A549 (cell line): ENCODE measurements at regions of chr13 and their contacts with region 1.

Region 1: DNA sequence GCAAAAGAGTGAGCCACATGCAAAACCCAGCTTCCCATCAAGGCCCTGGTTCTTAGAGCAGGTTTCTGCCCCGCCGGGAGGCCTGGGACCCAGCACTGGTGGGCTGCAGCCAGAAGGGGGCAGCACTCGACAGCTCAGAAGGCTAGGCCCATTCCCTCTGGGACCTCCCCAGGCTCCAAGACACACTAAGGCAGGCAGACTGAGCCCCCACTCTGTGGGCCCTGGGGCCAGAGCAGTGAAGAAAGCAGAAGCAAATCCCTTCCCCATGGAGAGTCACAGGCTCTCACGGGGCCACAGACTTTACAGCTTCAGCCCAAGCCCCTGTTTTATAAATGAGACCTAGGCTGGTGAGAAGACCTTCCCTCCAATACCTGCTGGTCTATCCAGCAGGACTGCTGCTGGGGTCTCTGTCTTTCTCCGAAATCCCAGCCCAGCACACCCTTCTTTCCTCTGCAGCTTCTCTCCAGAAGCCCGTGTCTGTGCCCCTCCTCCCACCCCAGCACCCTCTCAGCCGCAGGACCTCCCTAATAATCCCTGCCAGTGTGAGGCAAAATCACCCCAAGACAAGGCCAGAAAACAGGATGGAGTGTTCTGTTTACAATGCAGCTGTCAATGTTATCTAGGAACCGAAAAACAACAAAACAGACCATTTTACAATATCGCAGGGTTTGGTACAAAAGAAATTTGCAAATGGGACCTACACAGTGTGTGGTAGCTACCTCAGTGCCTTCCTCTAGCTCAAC is 109.3 kb downstream of the ABCC4 start:
- DNase-seq: peak; percentile 31 to 77
- ATAC-seq: peak; percentile 97 to 98
- H3K4me3 ChIP-seq: no peak overlapping the region
- H3K27ac ChIP-seq: peak overlapping the region; percentile 78 to 86
- H3K4me1 ChIP-seq: peaks cover 41% of the 10 kb centered on the region
- CTCF ChIP-seq: peak; percentile 83
- EP300 ChIP-seq: no peak
- POLR2A ChIP-seq: no peak
- RAD21 ChIP-seq: peak; percentile 90 to 93

Region 2: DNA sequence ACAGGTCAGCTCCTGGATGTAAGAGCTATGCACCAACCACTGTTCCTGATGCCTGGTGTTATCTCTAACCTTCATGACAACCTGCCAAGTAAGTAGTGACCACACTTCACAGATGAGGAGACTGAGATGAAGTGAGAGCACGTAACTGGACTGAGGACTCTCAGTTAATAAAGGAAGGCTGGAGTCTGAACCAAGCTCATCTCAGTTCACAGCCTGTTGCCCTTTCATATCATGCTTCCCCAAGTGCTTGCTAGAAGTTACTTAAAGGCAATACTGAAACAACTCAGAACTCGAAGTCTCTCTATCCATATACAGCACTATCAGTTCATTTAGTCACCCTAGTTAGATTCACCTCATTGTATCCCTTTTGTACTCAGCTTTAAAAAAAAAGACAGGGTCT is 10.4 kb before region 1 on chr13:
- CTCF ChIA-PET with region 1: interaction called, 12 read pairs
- POLR2A ChIA-PET with region 1: no interaction called
- DNase-seq: no peak
- ATAC-seq: no peak
- H3K4me3 ChIP-seq: no peak overlapping the region
- H3K27ac ChIP-seq: no peak overlapping the region; a peak in 1 of 6 replicates
- H3K4me1 ChIP-seq: peaks cover 20% of the 10 kb centered on the region
- CTCF ChIP-seq: no peak
- EP300 ChIP-seq: no peak
- POLR2A ChIP-seq: no peak
- RAD21 ChIP-seq: no peak

Region 3: GRCh38 chr13:95247852-95248251 is 55.9 kb after region 1 on chr13:
- CTCF ChIA-PET with region 1: interaction called, 10 read pairs
- POLR2A ChIA-PET with region 1: no interaction called
- DNase-seq: no peak
- ATAC-seq: no peak
- H3K4me3 ChIP-seq: no peak overlapping the region
- H3K27ac ChIP-seq: 0 out of 6 replicates have a peak overlapping the region, but pooled peaks of 1 of the 2 experiments have one; percentile 24
- H3K4me1 ChIP-seq: peaks cover 25% of the 10 kb centered on the region; the same call in 2 of the 3 replicates
- CTCF ChIP-seq: no peak
- EP300 ChIP-seq: no peak
- POLR2A ChIP-seq: no peak
- RAD21 ChIP-seq: no peak

Region 4: DNA sequence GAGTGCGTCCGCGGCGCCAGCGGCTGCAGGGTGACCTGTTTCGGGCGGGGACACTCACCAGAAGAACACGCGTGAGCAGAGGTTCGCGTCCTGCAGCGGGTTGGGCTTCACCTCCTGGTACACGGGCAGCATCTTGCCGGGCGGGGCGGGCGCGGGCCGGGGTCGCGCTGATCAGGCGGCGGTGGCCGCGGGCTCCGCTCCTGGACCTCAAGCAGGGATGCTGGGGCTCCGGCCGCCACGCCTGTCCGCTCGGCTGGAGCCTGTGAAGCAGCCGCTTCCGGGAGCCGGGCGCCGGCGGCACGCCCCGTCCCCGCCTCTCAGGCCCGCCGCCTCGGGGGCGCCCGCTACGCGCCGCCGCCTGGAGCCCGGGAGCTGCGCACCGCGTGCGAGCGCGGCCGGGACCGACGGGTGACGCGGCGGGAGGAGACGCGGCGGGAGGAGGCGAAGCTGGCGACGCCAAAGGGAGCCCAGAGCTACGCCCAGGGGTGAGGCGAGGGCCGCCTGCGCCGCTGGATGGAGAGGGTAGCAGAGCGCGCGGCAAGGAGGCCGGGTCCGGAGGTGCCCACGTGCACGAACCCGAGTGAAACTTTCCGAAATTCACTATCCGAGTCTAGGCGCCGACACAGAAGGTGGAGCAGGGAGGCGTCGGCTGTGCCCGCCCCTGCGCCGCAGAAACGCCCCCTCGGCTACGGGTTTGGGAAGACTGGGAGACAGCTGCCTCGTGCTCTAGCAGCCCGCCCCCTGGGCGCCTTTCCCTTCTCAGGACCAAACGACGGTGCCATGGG is 109.4 kb after region 1 on chr13 and contains the start of gene ABCC4:
- CTCF ChIA-PET with region 1: interaction called, 52 read pairs
- POLR2A ChIA-PET with region 1: no interaction called
- DNase-seq: peak; percentile 64 to 81
- ATAC-seq: peak; percentile 83
- H3K4me3 ChIP-seq: peak within 1 kb of the TSS; percentile 71
- H3K27ac ChIP-seq: peak within 1 kb of the TSS; percentile 90 to 96
- H3K4me1 ChIP-seq: peaks cover 38% of the 10 kb centered on the region
- CTCF ChIP-seq: no peak
- EP300 ChIP-seq: no peak
- POLR2A ChIP-seq: peak; percentile 27
- RAD21 ChIP-seq: no peak
- polyA plus RNA-seq, gene ABCC4: 46.4 and 56.2 TPM in 2 replicates

Region 5: GRCh38 chr13:95378603-95379002 is 186.6 kb after region 1 on chr13:
- CTCF ChIA-PET with region 1: interaction called, 180 read pairs
- POLR2A ChIA-PET with region 1: no interaction called
- DNase-seq: no peak
- ATAC-seq: no peak
- H3K4me3 ChIP-seq: no peak overlapping the region
- H3K27ac ChIP-seq: peak overlapping the region; percentile 9 to 12; a peak in 2 of 6 replicates
- H3K4me1 ChIP-seq: peaks cover 25% of the 10 kb centered on the region
- CTCF ChIP-seq: no peak
- EP300 ChIP-seq: no peak
- POLR2A ChIP-seq: no peak
- RAD21 ChIP-seq: no peak

Region 6: GRCh38 chr13:95403828-95404522 is 212.0 kb after region 1 on chr13:
- CTCF ChIA-PET with region 1: interaction called, 230 read pairs
- POLR2A ChIA-PET with region 1: no interaction called
- DNase-seq: peak; percentile 75 to 77
- ATAC-seq: peak; percentile 94 to 95
- H3K4me3 ChIP-seq: no peak overlapping the region
- H3K27ac ChIP-seq: peak overlapping the region; percentile 45 to 65; a peak in 4 of 6 replicates
- H3K4me1 ChIP-seq: peaks cover 5% of the 10 kb centered on the region; the same call in 2 of the 3 replicates
- CTCF ChIP-seq: peak; percentile 87
- EP300 ChIP-seq: no peak
- POLR2A ChIP-seq: no peak
- RAD21 ChIP-seq: peak; percentile 94 to 96

Region 7: DNA sequence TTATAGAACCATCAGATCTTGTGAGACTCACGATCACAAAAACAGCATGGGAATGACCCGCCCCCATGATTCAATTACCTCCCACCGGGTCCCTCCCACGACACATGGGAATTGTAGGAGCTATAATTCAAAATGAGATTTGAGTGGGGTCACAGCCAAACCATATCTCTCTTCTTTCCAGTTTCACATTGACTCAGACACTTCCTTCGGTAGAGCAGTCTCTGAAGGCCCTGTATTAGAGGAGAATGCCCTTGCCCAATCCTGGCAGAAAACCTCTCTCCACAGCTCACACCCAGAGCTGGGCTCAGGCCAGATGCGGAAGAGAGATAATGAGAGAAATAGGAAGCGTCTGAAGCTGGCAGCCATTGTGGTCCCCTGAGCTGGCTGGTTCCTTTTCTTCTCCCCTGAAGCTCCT is 288.1 kb after region 1 on chr13:
- CTCF ChIA-PET with region 1: interaction called, 31 read pairs
- POLR2A ChIA-PET with region 1: no interaction called
- DNase-seq: no peak
- ATAC-seq: no peak
- H3K4me3 ChIP-seq: no peak overlapping the region
- H3K27ac ChIP-seq: no peak overlapping the region
- H3K4me1 ChIP-seq: peaks cover 6% of the 10 kb centered on the region
- CTCF ChIP-seq: no peak
- EP300 ChIP-seq: no peak
- POLR2A ChIP-seq: no peak
- RAD21 ChIP-seq: no peak

Region 8: DNA sequence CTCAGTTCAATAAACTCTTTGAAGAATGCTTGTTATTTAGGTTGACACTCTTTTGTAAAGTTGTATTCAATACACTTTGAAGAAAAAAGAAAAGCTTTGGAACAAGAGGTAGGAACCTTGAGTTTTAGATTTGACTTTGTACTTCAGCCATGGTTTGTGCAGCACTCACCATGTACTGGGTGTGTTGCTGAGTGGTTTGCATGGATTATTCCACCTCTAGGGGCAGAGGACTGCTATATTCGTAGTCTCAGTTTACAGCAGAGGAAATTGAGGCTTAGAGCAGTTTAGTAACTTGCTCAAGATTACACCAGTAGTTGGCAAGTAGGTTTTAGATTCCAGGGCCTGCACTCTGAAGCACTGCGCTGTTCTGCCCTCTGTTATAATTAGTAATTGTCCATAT is 553.8 kb after region 1 on chr13:
- CTCF ChIA-PET with region 1: no interaction called
- POLR2A ChIA-PET with region 1: no interaction called
- DNase-seq: no peak
- ATAC-seq: peak in 1 of 2 experiments; percentile 76; a peak in 4 of 6 replicates
- H3K4me3 ChIP-seq: no peak overlapping the region
- H3K27ac ChIP-seq: no peak overlapping the region
- H3K4me1 ChIP-seq: 0 out of 3 replicates have a peak, but pooled peaks cover 3% of the 10 kb centered on the region
- CTCF ChIP-seq: no peak
- EP300 ChIP-seq: no peak
- POLR2A ChIP-seq: no peak
- RAD21 ChIP-seq: no peak

Region 9: DNA sequence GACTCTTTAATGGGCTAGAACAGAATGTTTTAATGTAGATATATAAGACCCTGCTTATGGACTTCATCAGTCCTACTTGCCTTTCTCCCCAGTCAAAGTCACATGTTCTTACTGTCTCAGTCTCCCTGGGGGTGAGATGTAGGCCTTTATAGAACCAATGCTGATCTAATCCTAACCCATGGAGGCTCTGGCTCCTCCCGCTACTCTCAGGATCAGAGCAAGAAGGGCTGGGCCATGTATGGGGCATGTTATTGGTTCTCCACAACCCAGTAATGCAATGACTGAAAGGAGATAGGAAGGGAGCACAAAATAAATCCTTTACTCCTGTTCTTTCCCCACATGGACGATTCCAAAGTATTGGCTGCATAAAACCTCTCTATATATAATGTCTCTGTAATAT is 778.9 kb after region 1 on chr13:
- CTCF ChIA-PET with region 1: no interaction called
- POLR2A ChIA-PET with region 1: no interaction called
- DNase-seq: no peak
- ATAC-seq: no peak
- H3K4me3 ChIP-seq: no peak overlapping the region
- H3K27ac ChIP-seq: no peak overlapping the region
- H3K4me1 ChIP-seq: no peaks in the 10 kb centered on the region
- CTCF ChIP-seq: no peak
- EP300 ChIP-seq: no peak
- POLR2A ChIP-seq: no peak
- RAD21 ChIP-seq: no peak